PC-9 (cell line): ENCODE measurements at regions of chr6 and their contacts with region 1.

Region 1: DNA sequence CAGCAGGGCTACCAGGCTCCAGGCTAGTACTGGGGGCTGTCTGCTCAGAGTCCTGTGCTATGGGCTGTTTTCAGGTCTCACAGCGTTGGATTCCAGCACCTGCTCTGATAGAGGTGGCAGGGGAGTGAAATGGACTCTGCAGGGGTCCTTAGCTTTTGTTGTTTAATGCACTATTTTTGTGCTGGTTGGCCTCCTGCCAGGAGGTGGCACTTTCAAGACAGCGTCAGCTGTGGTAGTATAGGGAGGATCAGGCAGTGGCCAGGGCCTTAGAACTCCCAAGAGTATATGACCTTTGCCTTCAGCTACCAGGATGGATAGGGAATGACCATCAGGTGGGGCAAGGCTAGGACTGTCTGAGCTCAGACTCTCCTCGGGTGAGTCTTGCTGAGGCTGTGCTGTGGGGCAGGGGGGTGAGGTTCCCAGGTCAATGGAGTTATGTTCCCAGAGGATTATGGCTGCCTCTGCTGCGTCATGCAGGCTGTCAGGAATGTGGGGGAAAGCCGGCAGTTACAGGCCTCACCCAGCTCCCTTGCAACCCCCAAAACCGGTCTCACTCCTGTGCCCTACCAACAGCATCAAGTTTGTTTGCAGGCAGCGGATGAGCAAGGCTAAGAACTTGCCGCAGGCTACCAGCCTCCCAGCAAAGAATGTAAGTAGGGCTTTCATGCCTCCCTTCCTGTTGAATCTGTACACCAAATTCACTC is 93.4 kb downstream of the ESR1 start:
- DNase-seq: peak; percentile 91 to 100
- H3K4me3 ChIP-seq: peak overlapping the region; percentile 47; the same call in 1 of the 2 replicates
- H3K27ac ChIP-seq: peak overlapping the region; percentile 100
- H3K4me1 ChIP-seq: peaks cover 42% of the 10 kb centered on the region
- H3K27me3 ChIP-seq: no peaks in the 10 kb centered on the region
- CTCF ChIP-seq: no peak; the same call in 1 of the 2 replicates

Region 2: GRCh38 chr6:151807533-151808370 is 93.1 kb before region 1 on chr6 and contains the start of gene ESR1:
- CTCF ChIA-PET with region 1: no interaction called
- POLR2A ChIA-PET with region 1: no interaction called
- intact Hi-C with region 1: loop called (anchors 5 kb)
- DNase-seq: peak in 1 of 2 experiments; percentile 36
- H3K4me3 ChIP-seq: peak within 1 kb of the TSS; percentile 57
- H3K27ac ChIP-seq: no peak within 1 kb of the TSS
- H3K4me1 ChIP-seq: 0 out of 2 replicates have a peak, but pooled peaks cover 3% of the 10 kb centered on the region
- H3K27me3 ChIP-seq: no peaks in the 10 kb centered on the region
- CTCF ChIP-seq: no peak; the same call in 1 of the 2 replicates
- total RNA-seq, gene ESR1: 1.5 TPM in 2 replicates

Region 3: DNA sequence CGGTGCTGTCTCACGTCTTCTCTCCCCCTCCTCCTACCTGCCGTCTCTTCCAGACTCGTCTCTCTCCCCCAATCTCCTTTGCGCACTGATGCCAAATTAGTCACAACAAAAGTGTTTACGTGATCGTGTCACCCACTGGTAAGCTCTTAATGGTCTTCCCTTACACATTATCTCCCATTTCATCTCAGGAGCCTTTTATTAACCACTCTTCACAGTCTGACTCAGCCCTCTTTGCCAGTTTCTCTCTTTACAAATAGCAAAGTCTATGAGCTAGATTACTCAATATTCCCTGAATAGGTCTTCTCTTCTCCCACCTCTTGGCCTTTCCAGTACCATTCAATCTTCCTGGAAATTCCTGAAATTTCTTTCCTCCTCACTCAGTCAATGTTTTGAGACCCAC is 153.6 kb after region 1 on chr6:
- CTCF ChIA-PET with region 1: no interaction called
- POLR2A ChIA-PET with region 1: no interaction called
- intact Hi-C with region 1: loop called (anchors 1 kb)
- DNase-seq: peak; percentile 15 to 88
- H3K4me3 ChIP-seq: peak overlapping the region; percentile 43; the same call in 1 of the 2 replicates
- H3K27ac ChIP-seq: peak overlapping the region; percentile 75
- H3K4me1 ChIP-seq: peaks cover 25% of the 10 kb centered on the region
- H3K27me3 ChIP-seq: no peaks in the 10 kb centered on the region
- CTCF ChIP-seq: no peak

Region 4: DNA sequence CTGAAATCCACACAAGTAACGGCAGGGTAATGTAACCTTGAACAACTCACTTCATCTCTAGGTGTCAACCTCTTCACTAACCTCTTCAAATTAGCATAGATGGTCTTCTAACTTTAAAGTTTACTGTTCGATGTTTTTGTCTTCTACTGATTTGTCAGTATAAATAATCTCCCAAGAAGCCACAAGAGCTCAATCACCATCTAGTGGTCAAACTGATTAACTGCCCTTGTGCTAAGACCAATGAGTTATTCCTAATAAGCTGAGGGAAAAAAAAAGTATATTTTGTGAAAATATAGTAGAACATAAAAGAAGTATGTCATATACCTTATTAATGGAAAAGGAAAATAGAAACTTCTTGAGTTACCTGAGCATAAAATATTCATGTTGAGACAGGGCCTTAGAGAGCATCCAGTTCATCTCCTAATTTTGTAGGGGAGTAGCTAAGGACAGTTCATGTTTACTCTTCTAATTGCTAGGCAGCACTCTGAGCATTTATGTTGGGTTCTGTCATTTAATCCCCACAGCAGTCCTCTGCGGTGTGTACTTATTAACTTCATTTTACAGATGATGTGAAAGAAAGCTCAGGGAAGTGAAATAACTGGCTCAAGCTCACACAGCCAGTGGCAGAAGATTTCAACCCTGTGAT is 223.7 kb after region 1 on chr6:
- CTCF ChIA-PET with region 1: no interaction called
- POLR2A ChIA-PET with region 1: interaction called, 4 read pairs
- intact Hi-C with region 1: loop called (anchors 1 kb)
- DNase-seq: peak in 1 of 2 experiments; percentile 47
- H3K4me3 ChIP-seq: no peak overlapping the region
- H3K27ac ChIP-seq: no peak overlapping the region
- H3K4me1 ChIP-seq: peaks cover 1% of the 10 kb centered on the region; the same call in 1 of the 2 replicates
- H3K27me3 ChIP-seq: no peaks in the 10 kb centered on the region
- CTCF ChIP-seq: peak; percentile 94

Region 5: DNA sequence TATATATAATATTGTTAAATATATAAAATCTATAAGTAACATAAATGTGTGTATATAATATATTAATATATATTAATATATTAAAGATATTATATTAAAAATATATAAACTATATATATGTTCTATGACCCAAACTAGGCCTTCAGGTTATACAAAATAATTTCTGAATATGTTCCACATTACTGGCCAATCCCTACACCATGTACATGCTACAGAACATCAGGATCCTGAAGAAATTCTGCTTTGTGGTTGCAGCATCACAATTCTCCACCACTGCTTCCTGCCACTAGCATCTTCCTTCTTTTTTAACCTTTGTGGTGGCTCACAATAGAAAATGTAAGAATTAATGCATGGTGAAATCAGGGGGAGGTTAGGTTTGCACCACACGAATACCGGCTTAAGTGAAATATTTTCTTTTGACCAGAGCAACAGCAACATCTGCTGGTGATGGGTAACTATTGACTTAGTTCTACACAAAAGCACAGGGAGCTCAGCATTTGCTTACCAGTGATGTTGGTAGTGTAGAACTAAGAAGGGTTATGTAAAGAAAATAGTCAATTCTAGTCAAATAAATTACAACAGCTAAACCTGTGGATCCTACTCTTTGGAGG is 455.7 kb after region 1 on chr6:
- CTCF ChIA-PET with region 1: no interaction called
- POLR2A ChIA-PET with region 1: interaction called, 18 read pairs
- intact Hi-C with region 1: no loop called
- DNase-seq: no peak
- H3K4me3 ChIP-seq: no peak overlapping the region
- H3K27ac ChIP-seq: no peak overlapping the region
- H3K4me1 ChIP-seq: peaks cover 10% of the 10 kb centered on the region
- H3K27me3 ChIP-seq: no peaks in the 10 kb centered on the region
- CTCF ChIP-seq: peak; percentile 58